GM12878 (cell line): ENCODE measurements at regions of chr2 and their contacts with region 1.

Region 1: DNA sequence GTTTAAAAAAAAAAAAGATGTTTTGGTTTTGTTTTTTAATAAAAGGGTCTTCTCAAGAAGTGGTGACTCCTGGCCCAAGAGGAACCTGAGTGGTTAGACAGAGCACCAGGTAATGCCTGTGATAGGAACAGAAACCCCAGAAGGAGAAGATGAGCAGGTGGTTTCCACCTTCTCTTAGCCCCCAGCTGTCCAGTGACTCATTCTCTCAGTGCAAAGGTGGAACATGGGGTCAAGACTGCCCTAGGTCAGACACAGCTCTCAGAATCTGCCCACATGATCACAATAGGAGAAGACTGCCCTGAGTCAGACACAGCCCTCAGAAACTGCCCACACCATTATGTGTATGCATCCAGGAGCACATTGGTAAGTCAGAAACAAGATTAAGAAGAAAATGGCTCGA is 61.8 kb downstream of the TBC1D8 start:
- DNase-seq: peak; percentile 66
- ATAC-seq: peak; percentile 97
- H3K4me3 ChIP-seq: no peak overlapping the region
- H3K27ac ChIP-seq: peak overlapping the region; percentile 39; the same call in 1 of the 2 replicates
- H3K4me1 ChIP-seq: peaks cover 27% of the 10 kb centered on the region
- H3K27me3 ChIP-seq: no peaks in the 10 kb centered on the region
- CTCF ChIP-seq: no peak
- EP300 ChIP-seq: peak in 1 of 2 experiments; percentile 55; a peak in 2 of 4 replicates
- POLR2A ChIP-seq: no peak
- RAD21 ChIP-seq: no peak

Region 2: DNA sequence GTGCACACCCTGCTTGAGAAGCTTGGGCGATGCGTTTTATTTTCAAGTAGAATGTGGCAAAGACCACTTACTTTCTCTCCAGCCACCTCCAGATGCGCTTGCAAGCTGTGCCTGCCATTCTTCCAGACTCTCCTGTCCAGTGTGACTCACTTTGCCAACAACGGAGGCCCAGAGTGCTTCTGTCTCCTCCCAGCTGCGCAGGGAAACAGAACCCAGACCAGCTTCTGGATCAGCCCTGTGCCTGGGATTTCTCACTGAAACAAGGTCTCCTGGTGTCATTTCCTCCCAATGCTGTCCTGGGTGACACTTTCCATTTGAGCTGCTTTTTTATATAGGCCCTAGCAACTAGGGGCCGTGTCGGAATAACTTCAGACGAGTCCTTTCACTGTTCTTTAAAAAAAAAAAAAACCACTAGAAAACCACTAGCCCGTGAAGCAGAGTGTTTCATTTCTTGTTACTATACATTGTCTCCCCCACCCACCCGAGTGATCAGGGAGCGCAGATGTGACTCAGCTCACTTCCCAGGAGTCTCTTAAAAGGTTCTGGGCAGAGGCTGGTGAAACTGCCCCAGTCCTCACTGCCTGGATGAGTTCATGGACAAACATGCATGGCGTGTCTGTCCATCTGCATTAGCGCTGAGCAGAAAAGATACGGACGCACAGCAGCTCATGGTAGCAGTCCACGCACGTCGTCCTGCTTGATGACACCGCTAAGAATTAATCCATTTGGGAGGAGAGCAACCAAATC is 112.6 kb before region 1 on chr2:
- CTCF ChIA-PET with region 1: no interaction called
- POLR2A ChIA-PET with region 1: no interaction called
- RAD21 ChIA-PET with region 1: no interaction called
- SMC1A ChIA-PET with region 1: no interaction called
- in situ Hi-C with region 1: no loop called
- intact Hi-C with region 1: no loop called
- DNase-seq: peak; percentile 25
- ATAC-seq: peak; percentile 93
- H3K4me3 ChIP-seq: no peak overlapping the region
- H3K27ac ChIP-seq: no peak overlapping the region
- H3K4me1 ChIP-seq: peaks cover 14% of the 10 kb centered on the region
- H3K27me3 ChIP-seq: peaks cover 2 to 3% of the 10 kb centered on the region in 2 experiments; a peak in 3 of 4 replicates
- CTCF ChIP-seq: no peak
- EP300 ChIP-seq: no peak
- POLR2A ChIP-seq: no peak
- RAD21 ChIP-seq: no peak

Region 3: DNA sequence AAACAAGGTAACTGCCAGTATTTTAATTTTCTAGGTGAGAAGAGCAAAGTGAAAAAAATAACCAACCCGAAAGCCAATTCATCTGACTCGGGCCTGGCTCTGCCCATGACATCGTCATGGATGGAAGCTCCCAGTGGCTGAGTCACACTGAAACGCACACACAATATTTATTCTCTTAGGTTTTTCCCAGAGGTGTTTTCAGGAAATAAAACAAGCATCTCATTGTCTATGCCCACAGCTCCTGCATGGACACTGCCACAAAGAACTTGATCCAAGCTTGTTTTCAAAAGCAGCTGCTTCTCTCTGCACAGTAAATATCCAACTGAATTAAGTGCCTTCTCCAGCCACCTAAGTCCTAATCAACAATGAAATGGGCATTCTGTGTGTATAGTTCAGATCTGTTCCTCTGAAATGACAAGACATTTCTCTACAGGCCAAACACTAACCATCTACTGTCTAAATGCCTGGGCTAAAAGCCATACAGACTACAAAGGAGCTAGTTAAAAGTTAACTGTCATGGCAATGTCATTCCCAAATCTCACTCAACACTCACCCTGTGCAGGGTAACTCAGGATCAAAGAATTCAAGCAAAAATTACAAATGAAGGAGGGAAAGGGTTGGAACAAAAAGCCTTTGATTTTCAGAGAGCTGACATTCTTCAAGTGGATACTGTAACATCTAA is 24.4 kb before region 1 on chr2:
- CTCF ChIA-PET with region 1: interaction called, 4 read pairs
- POLR2A ChIA-PET with region 1: interaction called, 4 read pairs
- RAD21 ChIA-PET with region 1: interaction called, 6 read pairs
- SMC1A ChIA-PET with region 1: interaction called, 14 read pairs
- in situ Hi-C with region 1: no loop called
- intact Hi-C with region 1: loop called (anchors 2 kb)
- DNase-seq: no peak
- ATAC-seq: peak; percentile 91
- H3K4me3 ChIP-seq: no peak overlapping the region
- H3K27ac ChIP-seq: peak overlapping the region; percentile 53
- H3K4me1 ChIP-seq: peaks cover 11% of the 10 kb centered on the region
- H3K27me3 ChIP-seq: no peaks in the 10 kb centered on the region
- CTCF ChIP-seq: no peak
- EP300 ChIP-seq: peak in 1 of 2 experiments; percentile 35; a peak in 2 of 4 replicates
- POLR2A ChIP-seq: no peak
- RAD21 ChIP-seq: no peak

Region 4: DNA sequence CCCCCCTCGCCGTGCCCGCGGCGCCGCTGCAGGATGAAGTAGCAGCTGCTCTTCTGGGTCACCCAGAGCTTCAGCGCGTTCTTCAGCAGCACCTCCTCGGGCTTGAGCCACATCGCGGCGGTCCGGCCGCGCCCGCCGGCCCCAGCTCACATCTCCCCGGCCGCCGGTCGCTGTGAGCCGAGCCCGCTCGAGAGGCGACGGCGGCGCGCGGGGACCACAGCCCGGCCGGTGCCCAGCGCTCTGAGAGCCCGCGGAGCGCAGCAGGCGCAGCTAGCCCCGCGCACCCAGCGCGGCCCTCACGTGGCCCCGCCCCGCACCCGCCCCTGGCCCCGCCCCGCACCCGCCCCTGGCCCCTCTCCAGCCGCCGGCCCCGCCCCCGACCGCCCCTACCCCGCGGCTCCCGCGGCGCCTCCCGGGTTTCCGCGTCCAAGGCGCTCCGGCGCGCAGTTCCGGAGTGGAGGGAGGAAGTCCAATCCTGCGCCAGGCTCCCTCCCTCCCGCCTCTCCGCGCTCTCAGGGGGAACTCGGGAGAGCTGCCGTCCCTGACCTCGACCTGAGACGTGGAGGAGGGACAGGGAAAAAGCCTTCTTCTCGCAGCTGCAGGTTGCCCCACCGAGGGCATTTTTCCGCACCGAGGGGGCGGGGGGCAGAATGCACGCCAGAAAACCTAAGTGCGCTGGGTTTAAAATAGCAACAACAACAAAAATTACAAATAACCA is 61.9 kb after region 1 on chr2 and contains the start of gene TBC1D8:
- CTCF ChIA-PET with region 1: interaction called, 4 read pairs
- POLR2A ChIA-PET with region 1: no interaction called
- RAD21 ChIA-PET with region 1: no interaction called
- SMC1A ChIA-PET with region 1: interaction called, 7 read pairs
- in situ Hi-C with region 1: no loop called
- intact Hi-C with region 1: loop called (anchors 2 kb)
- DNase-seq: no peak
- ATAC-seq: peak; percentile 84
- H3K4me3 ChIP-seq: peak within 1 kb of the TSS; percentile 61
- H3K27ac ChIP-seq: no peak within 1 kb of the TSS
- H3K4me1 ChIP-seq: peaks cover 10% of the 10 kb centered on the region
- H3K27me3 ChIP-seq: peaks cover 0 to 3% of the 10 kb centered on the region in 2 experiments; a peak in 2 of 4 replicates
- CTCF ChIP-seq: no peak
- EP300 ChIP-seq: no peak
- POLR2A ChIP-seq: peak; percentile 73
- RAD21 ChIP-seq: no peak
- polyA plus RNA-seq, gene TBC1D8: 0.80 to 1.5 TPM

Region 5: GRCh38 chr2:101267671-101268656 is 178.5 kb after region 1 on chr2:
- CTCF ChIA-PET with region 1: no interaction called
- POLR2A ChIA-PET with region 1: no interaction called
- RAD21 ChIA-PET with region 1: no interaction called
- SMC1A ChIA-PET with region 1: no interaction called
- in situ Hi-C with region 1: no loop called
- intact Hi-C with region 1: no loop called
- DNase-seq: peak; percentile 42
- ATAC-seq: peak; percentile 77
- H3K4me3 ChIP-seq: no peak overlapping the region
- H3K27ac ChIP-seq: no peak overlapping the region
- H3K4me1 ChIP-seq: peaks cover 11% of the 10 kb centered on the region
- H3K27me3 ChIP-seq: no peaks in the 10 kb centered on the region
- CTCF ChIP-seq: no peak
- EP300 ChIP-seq: peak in 1 of 2 experiments; percentile 38; a peak in 1 of 4 replicates
- POLR2A ChIP-seq: no peak
- RAD21 ChIP-seq: no peak